Activated CD8-positive, alpha-beta memory T cell treated with anti-CD3 and anti-CD28 coated beads, Interleukin-2, amount 10 ng/mL, durations not matched to agents 7 days and 5 days (primary cell): ENCODE measurements at regions of chr6 and their contacts with region 1.

Region 1: GRCh38 chr6:118800394-118801071 is 93.4 kb upstream of the ASF1A start:
- DNase-seq: peak; percentile 92
- ATAC-seq: peak; percentile 93
- H3K4me3 Mint-ChIP-seq: peak overlapping the region; percentile 33
- H3K27ac Mint-ChIP-seq: peak overlapping the region; percentile 76
- H3K4me1 Mint-ChIP-seq: peaks cover 32% of the 10 kb centered on the region
- H3K27me3 Mint-ChIP-seq: no peaks in the 10 kb centered on the region

Region 2: DNA sequence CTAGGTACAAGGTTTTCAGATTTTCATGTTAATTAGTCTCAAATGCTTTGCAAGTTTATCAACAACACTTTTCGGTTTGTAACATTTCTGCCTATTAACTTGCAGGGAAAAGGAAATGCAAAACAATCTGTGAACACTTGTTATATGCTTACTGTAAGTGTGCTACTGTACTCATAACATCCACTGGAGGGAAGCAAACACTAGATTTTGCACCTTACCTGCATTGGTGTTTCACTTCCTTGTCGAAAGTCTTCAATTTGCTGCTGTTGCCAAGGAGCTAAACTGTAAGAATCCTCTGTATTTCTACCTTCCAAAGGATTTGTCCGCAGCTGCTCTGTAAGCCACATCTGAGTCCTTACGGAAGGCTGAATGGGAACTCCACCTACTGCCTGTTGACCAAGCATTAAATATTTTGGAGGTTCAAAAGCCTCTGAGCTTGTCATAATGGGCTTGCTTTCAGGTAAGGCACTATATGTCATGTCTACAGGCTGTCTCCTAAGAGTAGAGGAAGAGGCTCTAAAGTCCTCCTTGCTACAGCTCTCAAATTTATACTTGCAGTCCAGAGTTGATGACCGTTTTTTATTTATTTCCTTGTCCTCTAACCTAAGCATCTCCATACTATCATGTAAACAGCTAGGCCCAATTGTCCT is 235.1 kb before region 1 on chr6:
- CTCF ChIA-PET with region 1: interaction called, 14 read pairs
- DNase-seq: no peak
- ATAC-seq: peak; percentile 91
- H3K4me3 Mint-ChIP-seq: no peak overlapping the region
- H3K27ac Mint-ChIP-seq: no peak overlapping the region
- H3K4me1 Mint-ChIP-seq: peaks cover 7% of the 10 kb centered on the region
- H3K27me3 Mint-ChIP-seq: no peaks in the 10 kb centered on the region

Region 3: DNA sequence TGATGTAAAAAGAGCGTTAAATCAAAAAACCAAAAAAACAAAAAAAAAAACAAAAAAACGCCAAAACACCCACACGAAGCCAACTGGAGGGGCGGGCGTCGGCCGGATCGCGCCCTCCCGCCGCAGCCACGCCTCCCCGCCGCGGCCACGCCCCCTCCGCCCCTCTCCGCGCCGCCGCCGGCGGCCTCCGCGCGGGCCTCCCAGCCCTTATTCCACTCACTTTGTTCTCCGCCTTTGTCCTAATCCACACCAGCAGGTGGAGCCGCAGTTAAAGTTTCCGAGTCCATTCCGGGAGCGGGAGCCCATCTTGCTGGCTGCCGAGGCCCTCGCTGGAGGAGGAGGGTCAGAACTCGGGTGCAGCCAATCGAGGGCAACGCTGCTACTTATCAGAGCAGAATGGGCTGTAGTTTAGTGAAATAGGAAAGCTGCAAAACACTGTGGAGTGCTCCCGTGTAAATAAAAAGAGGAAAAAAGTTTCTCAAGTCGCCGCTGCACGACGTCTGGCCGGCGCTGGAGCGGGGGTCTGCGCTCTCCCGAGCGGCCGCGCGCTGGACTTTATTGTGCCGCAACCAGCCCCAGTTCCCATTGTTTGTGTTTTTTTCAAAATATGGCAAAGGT is 93.4 kb after region 1 on chr6 and contains the start of gene ASF1A:
- CTCF ChIA-PET with region 1: interaction called, 29 read pairs
- DNase-seq: peak; percentile 98
- ATAC-seq: peak; percentile 78
- H3K4me3 Mint-ChIP-seq: peak within 1 kb of the TSS; percentile 82
- H3K27ac Mint-ChIP-seq: peak within 1 kb of the TSS; percentile 96
- H3K4me1 Mint-ChIP-seq: peaks cover 55% of the 10 kb centered on the region
- H3K27me3 Mint-ChIP-seq: no peaks in the 10 kb centered on the region
- total RNA-seq, gene ASF1A: 56.4 to 65.7 TPM

Region 4: DNA sequence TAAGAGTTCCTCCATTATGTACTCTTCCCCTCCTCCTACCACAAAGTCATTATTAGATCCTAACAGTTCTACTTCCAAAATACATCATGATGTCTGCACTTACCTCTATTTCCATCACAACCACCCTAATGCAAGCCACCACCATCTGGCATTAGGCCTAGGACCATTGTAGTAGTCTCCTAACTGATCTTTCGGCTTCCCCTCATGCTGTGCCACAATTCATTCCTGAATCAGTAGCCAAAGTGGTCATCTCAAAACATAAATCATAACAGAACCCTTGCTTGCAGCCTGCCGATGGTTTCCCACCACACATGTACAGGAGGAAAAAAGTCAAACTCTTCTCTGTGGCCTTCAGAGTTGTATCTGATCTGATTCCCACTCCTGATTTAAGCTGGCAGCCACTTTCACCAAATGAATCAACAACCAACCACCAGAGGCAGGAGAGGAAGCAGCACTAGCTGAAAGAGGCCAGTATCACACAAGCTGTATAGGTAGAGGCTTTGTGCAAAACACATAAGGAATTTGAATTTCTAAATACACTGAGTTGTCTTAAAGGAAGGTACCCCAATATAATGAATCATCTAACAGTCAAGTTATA is 251.9 kb after region 1 on chr6:
- CTCF ChIA-PET with region 1: no interaction called
- DNase-seq: peak; percentile 73
- ATAC-seq: peak; percentile 89
- H3K4me3 Mint-ChIP-seq: no peak overlapping the region
- H3K27ac Mint-ChIP-seq: peak overlapping the region; percentile 77
- H3K4me1 Mint-ChIP-seq: peaks cover 24% of the 10 kb centered on the region
- H3K27me3 Mint-ChIP-seq: peaks cover under 1% of the 10 kb centered on the region